ENCODE measurements at regions of chr10 and their contacts with region 1.

Region 1: DNA sequence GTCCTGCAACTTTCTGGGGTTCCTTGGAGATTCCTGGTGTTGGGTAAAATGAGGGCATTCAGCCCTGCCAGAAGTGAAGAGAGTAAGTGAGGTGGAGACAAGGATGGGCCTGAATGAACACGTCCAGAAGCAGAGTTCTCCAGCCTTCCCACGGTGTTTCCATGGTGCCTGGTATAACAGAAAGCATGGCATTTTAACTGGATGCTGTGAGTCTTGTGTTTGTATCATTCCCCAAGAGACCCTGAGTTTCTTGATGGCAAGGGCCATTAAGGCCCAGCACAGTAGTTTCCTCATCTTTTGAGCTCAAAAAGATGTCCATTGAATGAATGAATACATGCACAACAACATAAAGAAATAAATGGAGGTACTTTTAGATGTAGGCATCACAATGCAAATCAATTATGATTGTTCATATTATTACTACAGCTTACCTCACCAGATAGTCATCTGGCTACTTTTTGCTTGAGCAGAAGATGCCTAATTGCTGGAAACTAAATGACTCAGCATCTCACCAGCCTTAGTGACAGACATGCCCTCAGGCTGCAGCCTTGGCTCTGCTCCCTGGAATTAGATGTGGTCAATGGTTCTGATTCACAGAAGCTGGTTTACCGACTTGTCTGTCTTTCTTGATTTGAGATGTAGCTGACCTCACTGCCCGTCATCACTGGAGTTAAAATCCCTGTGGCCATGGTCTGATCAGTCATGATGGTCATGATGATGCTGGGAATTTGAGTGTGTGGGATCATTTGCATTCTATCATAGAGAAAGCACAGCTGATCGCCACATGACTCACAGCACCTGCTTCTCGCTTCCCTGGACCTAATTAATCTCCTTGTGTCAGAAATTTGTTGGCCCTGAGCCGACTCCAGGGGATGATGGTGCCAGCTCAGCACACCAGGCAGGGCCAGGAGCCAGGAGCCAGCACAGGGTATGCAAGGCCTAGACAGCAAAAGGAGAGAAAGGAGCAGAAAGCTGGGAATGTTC is 83.9 kb downstream of the CXCL12 start:
- DNase-seq: no peak
- ATAC-seq: no peak
- H3K4me3 ChIP-seq: no peak overlapping the region
- H3K27ac ChIP-seq: no peak overlapping the region
- H3K4me1 ChIP-seq: peaks cover 0 to 7% of the 10 kb centered on the region in 2 donors
- H3K27me3 ChIP-seq: no peaks in the 10 kb centered on the region

Region 2: GRCh38 chr10:43816351-43817321 is 484.3 kb before region 1 on chr10:
- intact Hi-C with region 1: loop called in 1 of 2 experiments (anchors 10 kb)
- DNase-seq: peak in 1 of 2 donors; percentile 67
- ATAC-seq: peak; percentile 47
- H3K4me3 ChIP-seq: no peak overlapping the region
- H3K27ac ChIP-seq: peak overlapping the region; percentile 48 to 96
- H3K4me1 ChIP-seq: no peaks in the 10 kb centered on the region
- H3K27me3 ChIP-seq: no peaks in the 10 kb centered on the region

Measured in aorta (tissue), 5 donors.